OCI-LY7 (cell line): ENCODE measurements at regions of chr3 and their contacts with region 1.

Region 1: DNA sequence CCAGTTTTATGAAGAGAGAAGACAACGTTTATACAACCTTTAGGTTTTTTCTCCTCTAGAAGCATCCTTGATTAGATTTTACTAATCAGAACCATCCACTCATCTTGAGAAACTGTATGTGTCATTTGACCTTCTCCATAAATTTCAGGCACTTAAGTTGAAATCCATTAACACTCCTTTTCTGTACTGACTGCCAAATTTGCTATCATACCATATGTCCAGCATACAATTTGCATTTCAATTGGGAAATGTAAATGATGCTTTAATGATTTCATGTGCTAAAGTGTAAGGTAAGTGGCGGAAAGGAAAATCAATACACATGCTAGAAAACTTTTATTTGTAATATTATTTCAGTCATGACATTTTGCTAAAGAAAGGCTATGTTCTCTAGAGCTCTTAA is 731.6 kb downstream of the GBE1 start:
- DNase-seq: no peak
- H3K4me3 ChIP-seq: no peak overlapping the region
- H3K27ac ChIP-seq: no peak overlapping the region
- H3K4me1 ChIP-seq: no peaks in the 10 kb centered on the region
- CTCF ChIP-seq: no peak

Region 2: GRCh38 chr3:81040111-81040510 is 10.2 kb after region 1 on chr3:
- CTCF ChIA-PET with region 1: no interaction called
- POLR2A ChIA-PET with region 1: interaction called, 10 read pairs
- intact Hi-C with region 1: no loop called
- DNase-seq: no peak
- H3K4me3 ChIP-seq: no peak overlapping the region
- H3K27ac ChIP-seq: no peak overlapping the region
- H3K4me1 ChIP-seq: no peaks in the 10 kb centered on the region
- CTCF ChIP-seq: no peak